OCI-LY7 (cell line): ENCODE measurements at regions of chr2 and their contacts with region 1.

Region 1: GRCh38 chr2:190904640-190905261 is 24.1 kb downstream of the GLS start:
- DNase-seq: no peak
- H3K4me3 ChIP-seq: no peak overlapping the region
- H3K27ac ChIP-seq: no peak overlapping the region
- H3K4me1 ChIP-seq: no peaks in the 10 kb centered on the region
- CTCF ChIP-seq: no peak

Region 2: DNA sequence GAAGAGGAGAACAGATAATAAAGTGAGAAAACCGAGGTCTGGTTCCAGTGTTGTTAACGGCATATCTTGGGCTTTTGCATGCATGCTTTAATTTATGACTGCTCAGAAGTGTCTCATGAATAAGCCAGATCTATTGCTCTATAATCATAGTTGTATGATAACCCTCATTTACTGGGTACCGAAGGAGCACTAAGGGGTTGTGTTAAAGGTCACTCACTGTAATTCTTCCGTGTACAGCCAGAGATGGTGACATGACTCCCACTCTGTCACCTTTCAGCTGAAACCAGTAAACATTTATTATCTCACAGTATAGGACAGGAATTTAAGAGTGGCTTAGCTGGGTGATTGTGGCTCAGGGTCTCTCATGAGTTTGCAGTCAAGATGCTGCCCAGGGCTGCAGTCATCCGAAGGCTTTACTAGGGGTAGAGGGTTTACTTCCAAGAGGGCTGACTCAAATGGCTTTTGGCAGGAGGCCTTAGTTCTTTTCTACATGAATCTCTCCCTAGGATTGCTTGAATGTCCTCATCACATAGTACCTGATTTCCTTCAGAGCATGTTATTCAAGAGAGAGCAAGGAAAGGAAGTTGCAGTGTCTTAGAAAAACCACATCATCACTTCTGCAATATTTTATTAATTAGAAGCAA is 148.9 kb before region 1 on chr2:
- CTCF ChIA-PET with region 1: no interaction called
- POLR2A ChIA-PET with region 1: no interaction called
- intact Hi-C with region 1: no loop called
- DNase-seq: no peak
- H3K4me3 ChIP-seq: no peak overlapping the region
- H3K27ac ChIP-seq: no peak overlapping the region
- H3K4me1 ChIP-seq: no peaks in the 10 kb centered on the region
- CTCF ChIP-seq: no peak

Region 3: GRCh38 chr2:190780594-190780993 is 124.2 kb before region 1 on chr2:
- CTCF ChIA-PET with region 1: no interaction called
- POLR2A ChIA-PET with region 1: no interaction called
- intact Hi-C with region 1: no loop called
- DNase-seq: no peak
- H3K4me3 ChIP-seq: no peak overlapping the region
- H3K27ac ChIP-seq: no peak overlapping the region
- H3K4me1 ChIP-seq: no peaks in the 10 kb centered on the region
- CTCF ChIP-seq: no peak

Region 4: GRCh38 chr2:190887089-190887488 is 17.7 kb before region 1 on chr2:
- CTCF ChIA-PET with region 1: no interaction called
- POLR2A ChIA-PET with region 1: interaction called, 13 read pairs
- intact Hi-C with region 1: no loop called
- DNase-seq: no peak
- H3K4me3 ChIP-seq: no peak overlapping the region
- H3K27ac ChIP-seq: no peak overlapping the region
- H3K4me1 ChIP-seq: peaks cover 57% of the 10 kb centered on the region
- CTCF ChIP-seq: no peak